ENCODE measurements at regions of chr20 and their contacts with region 1.

Region 1: DNA sequence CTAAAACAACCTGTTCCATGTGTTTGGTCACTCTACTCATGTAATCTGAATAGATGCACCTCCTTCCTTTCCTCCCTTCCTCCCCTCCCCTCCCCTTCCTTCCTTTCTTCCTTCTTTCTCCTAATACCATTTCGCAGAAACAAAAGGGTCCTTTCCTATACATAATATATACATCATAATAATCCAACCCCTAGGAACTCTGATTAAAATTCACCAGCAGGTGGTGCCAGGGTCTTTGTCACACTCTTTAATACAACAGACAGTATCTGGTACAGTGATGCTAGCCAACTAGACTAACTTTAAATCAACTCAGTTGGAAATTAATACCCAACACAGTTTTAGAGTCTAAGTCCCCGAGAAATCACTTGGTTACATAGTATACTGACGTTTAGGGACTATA is 181.2 kb upstream of the SHLD1 start:
- DNase-seq: peak in 7 of 9 donors; percentile 56 to 75 (median 67)
- ATAC-seq: peak; percentile 77
- H3K4me3 ChIP-seq: no peak overlapping the region
- H3K4me3 Mint-ChIP-seq: peak overlapping the region in 8 of 10 donors; percentile 22 to 83 (median 49)
- H3K27ac ChIP-seq: peak overlapping the region; percentile 58
- H3K27ac Mint-ChIP-seq: peak overlapping the region; percentile 6 to 96 (median 90)
- H3K4me1 ChIP-seq: peaks cover 0 to 17% of the 10 kb centered on the region in 2 donors
- H3K4me1 Mint-ChIP-seq: peaks cover 20 to 59% (median 36%) of the 10 kb centered on the region in 7 donors
- H3K27me3 ChIP-seq: no peaks in the 10 kb centered on the region
- H3K27me3 Mint-ChIP-seq: no peaks in the 10 kb centered on the region

Region 2: DNA sequence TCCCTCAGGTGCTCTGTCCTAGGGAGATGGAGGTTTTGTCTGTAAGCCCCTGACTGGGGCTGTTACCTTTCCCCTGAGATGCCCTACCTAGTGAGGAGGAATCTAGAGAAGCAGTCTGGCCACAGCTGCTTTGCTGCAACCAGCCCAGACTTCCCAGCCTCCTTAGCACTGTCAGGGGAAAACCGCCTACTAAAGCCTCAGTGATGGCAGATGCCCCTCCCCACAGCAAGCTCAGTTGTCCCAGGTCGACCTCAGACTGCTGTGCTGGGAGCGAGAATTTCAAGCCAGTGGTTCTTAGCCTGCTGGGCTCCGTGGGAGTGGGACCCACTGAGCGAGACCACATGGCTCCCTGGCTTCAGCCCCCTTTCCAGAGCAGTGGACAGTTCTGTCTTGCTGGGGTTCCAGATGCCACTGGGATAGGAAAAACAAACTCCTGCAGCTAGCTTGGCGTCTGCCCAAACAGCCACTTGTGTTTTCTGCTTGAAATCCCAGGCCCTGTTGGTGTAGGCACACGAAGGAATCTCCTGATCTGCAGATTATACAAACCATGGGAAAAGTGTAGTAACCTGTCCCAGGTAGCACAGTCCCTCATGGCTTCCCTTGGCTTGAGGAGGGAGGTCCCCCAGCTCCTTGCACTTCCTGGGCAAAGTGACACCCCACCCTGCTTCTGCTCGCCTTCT is 105.9 kb before region 1 on chr20:
- CTCF ChIA-PET with region 1: no interaction called
- POLR2A ChIA-PET with region 1: no interaction called
- intact Hi-C with region 1: no loop called
- DNase-seq: no peak
- ATAC-seq: no peak
- H3K4me3 ChIP-seq: no peak overlapping the region
- H3K4me3 Mint-ChIP-seq: no peak overlapping the region
- H3K27ac ChIP-seq: no peak overlapping the region
- H3K27ac Mint-ChIP-seq: no peak overlapping the region
- H3K4me1 ChIP-seq: no peaks in the 10 kb centered on the region
- H3K4me1 Mint-ChIP-seq: no peaks in the 10 kb centered on the region
- H3K27me3 ChIP-seq: no peaks in the 10 kb centered on the region
- H3K27me3 Mint-ChIP-seq: peaks cover 15 to 55% (median 32%) of the 10 kb centered on the region in 5 donors

Region 3: DNA sequence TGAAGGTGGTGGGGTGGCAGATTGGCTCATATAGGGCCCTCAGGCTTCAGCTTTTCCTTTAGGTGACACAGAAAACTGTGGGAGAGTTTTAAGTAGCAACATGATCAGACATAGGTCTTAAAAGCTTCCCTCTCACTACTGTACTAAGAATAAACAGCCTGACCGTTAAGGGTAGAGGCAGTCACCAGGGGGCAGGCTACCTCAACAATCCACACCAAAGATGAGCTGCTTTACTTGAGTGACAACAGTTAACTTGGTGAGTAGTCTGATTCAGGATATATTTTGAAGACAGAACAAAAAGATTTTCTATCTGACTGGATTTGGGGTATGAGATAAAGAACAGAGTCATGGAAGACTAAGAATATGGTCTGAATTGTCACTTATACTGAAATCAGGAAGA is 11.9 kb before region 1 on chr20:
- CTCF ChIA-PET with region 1: interaction called, 10 read pairs
- POLR2A ChIA-PET with region 1: interaction called, 3 read pairs
- intact Hi-C with region 1: no loop called
- DNase-seq: peak in 8 of 9 donors; percentile 24 to 63 (median 41)
- ATAC-seq: peak; percentile 77
- H3K4me3 ChIP-seq: no peak overlapping the region
- H3K4me3 Mint-ChIP-seq: no peak overlapping the region
- H3K27ac ChIP-seq: peak overlapping the region; percentile 11
- H3K27ac Mint-ChIP-seq: peak overlapping the region; percentile 1 to 74 (median 25)
- H3K4me1 ChIP-seq: no peaks in the 10 kb centered on the region
- H3K4me1 Mint-ChIP-seq: peaks cover 2 to 35% (median 13%) of the 10 kb centered on the region in 7 donors
- H3K27me3 ChIP-seq: no peaks in the 10 kb centered on the region
- H3K27me3 Mint-ChIP-seq: no peaks in the 10 kb centered on the region

Region 4: GRCh38 chr20:5596401-5597193 is 27.6 kb after region 1 on chr20:
- CTCF ChIA-PET with region 1: interaction called, 3 read pairs
- POLR2A ChIA-PET with region 1: interaction called, 5 read pairs
- intact Hi-C with region 1: loop called in 1 of 2 experiments (anchors 1 kb)
- DNase-seq: no peak
- ATAC-seq: no peak
- H3K4me3 ChIP-seq: no peak overlapping the region
- H3K4me3 Mint-ChIP-seq: peak overlapping the region in 9 of 10 donors; percentile 2 to 74 (median 29)
- H3K27ac ChIP-seq: peak overlapping the region; percentile 52
- H3K27ac Mint-ChIP-seq: peak overlapping the region; percentile 47 to 88 (median 77)
- H3K4me1 ChIP-seq: peaks cover 21 to 58% of the 10 kb centered on the region in 2 donors
- H3K4me1 Mint-ChIP-seq: peaks cover 38 to 76% (median 70%) of the 10 kb centered on the region in 7 donors
- H3K27me3 ChIP-seq: no peaks in the 10 kb centered on the region
- H3K27me3 Mint-ChIP-seq: no peaks in the 10 kb centered on the region

Region 5: GRCh38 chr20:5627463-5628050 is 58.5 kb after region 1 on chr20:
- CTCF ChIA-PET with region 1: no interaction called
- POLR2A ChIA-PET with region 1: no interaction called
- intact Hi-C with region 1: no loop called
- DNase-seq: no peak
- ATAC-seq: no peak
- H3K4me3 ChIP-seq: no peak overlapping the region
- H3K4me3 Mint-ChIP-seq: no peak overlapping the region
- H3K27ac ChIP-seq: no peak overlapping the region
- H3K27ac Mint-ChIP-seq: peak overlapping the region in 2 of 9 donors; percentile 21 to 39
- H3K4me1 ChIP-seq: no peaks in the 10 kb centered on the region
- H3K4me1 Mint-ChIP-seq: peaks cover 0 to 2% (median 0%) of the 10 kb centered on the region in 7 donors
- H3K27me3 ChIP-seq: no peaks in the 10 kb centered on the region
- H3K27me3 Mint-ChIP-seq: no peaks in the 10 kb centered on the region

Region 6: GRCh38 chr20:5749952-5750779 is 181.1 kb after region 1 on chr20 and contains the start of gene SHLD1:
- CTCF ChIA-PET with region 1: interaction called, 4 read pairs
- POLR2A ChIA-PET with region 1: no interaction called
- intact Hi-C with region 1: loop called in 1 of 2 experiments (anchors 1 kb)
- DNase-seq: peak; percentile 56 to 86 (median 80)
- ATAC-seq: peak; percentile 98
- H3K4me3 ChIP-seq: peak within 1 kb of the TSS; percentile 70
- H3K4me3 Mint-ChIP-seq: peak within 1 kb of the TSS; percentile 81 to 97 (median 92)
- H3K27ac ChIP-seq: peak within 1 kb of the TSS; percentile 79
- H3K27ac Mint-ChIP-seq: peak within 1 kb of the TSS; percentile 91 to 100 (median 94)
- H3K4me1 ChIP-seq: peaks cover 5 to 14% of the 10 kb centered on the region in 2 donors
- H3K4me1 Mint-ChIP-seq: peaks cover 15 to 38% (median 28%) of the 10 kb centered on the region in 7 donors
- H3K27me3 ChIP-seq: no peaks in the 10 kb centered on the region
- H3K27me3 Mint-ChIP-seq: peaks cover 0 to 4% (median 0%) of the 10 kb centered on the region in 5 donors
- total RNA-seq, gene SHLD1: 12.1 to 14.2 (median 13.2) TPM

Region 7: DNA sequence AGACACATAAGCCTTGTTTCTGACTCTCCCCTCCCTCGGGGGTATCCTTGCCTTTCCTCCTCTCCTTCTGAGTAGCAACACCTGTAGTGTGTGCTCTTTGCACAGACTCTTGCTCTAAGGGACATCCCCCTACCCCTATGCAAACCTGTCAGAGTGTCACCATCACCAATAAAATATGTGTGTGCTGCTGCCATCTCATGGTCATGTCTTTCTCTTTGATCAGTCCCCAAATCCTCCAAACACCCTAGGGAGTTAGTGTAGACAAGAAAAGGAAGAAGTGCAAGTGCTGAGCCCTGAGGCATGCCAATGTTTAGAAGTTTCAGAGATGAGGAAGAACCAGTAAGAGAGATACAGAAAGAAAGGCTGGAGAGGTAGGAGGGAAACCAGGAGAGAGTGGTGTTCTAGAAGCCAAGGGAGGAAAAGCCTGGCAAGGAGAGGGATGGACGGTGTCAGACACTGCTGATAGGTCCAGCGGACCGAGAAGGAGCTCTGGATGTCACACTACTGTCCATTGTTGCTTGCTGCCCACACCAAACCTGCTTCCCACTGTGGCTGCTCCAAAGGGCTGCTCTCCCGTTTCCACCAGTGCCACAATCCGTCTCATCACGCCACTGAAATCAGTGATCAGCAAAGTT is 364.9 kb after region 1 on chr20:
- CTCF ChIA-PET with region 1: no interaction called
- POLR2A ChIA-PET with region 1: no interaction called
- intact Hi-C with region 1: loop called in 1 of 2 experiments (anchors 2 kb)
- DNase-seq: peak in 1 of 9 donors; percentile 36
- ATAC-seq: peak; percentile 44
- H3K4me3 ChIP-seq: no peak overlapping the region
- H3K4me3 Mint-ChIP-seq: no peak overlapping the region
- H3K27ac ChIP-seq: no peak overlapping the region
- H3K27ac Mint-ChIP-seq: peak overlapping the region in 2 of 9 donors; percentile 18 to 32
- H3K4me1 ChIP-seq: no peaks in the 10 kb centered on the region
- H3K4me1 Mint-ChIP-seq: peaks cover 0 to 9% (median 0%) of the 10 kb centered on the region in 7 donors
- H3K27me3 ChIP-seq: no peaks in the 10 kb centered on the region
- H3K27me3 Mint-ChIP-seq: peaks cover 0 to 9% (median 3%) of the 10 kb centered on the region in 5 donors

Region 8: DNA sequence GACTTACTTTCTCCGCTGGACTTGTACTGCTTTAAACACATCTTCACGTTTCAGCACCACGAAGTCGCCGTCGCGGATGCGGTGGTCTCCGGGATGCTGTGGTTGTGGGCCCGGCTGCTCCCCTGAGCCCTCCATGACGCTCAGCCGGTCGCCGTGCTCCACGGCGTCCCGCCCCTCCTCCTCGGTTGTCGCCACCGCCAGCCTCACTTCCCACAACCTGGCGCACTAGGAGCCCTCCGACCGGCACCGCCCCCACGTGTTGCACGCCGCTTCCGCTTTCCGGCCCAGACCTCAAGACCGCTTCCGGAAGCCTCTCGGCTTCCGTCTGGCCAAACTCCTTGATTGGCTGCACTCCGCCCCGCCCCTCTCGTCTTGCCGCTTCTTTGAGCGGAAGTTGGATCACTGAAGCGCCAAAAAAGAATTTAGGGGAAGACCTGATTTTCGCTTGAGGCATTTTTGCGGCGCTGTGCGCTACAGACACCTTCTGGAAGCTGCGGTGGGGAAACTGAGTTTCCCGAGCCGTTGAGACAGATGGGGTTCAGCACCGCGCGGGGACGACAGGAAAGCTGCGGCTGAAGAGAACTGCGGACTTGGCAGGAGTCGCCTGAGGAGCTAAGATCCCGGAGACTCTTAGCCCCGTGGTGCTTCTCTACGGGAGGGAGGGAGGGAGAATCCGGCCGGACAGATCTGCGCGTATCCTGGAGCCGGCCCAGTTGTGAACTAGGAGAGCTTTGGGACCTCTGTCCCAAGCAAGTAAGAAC is 381.4 kb after region 1 on chr20 and contains the starts of genes MCM8 and TRMT6:
- CTCF ChIA-PET with region 1: interaction called, 3 read pairs
- POLR2A ChIA-PET with region 1: no interaction called
- intact Hi-C with region 1: loop called in 1 of 2 experiments (anchors 1 kb)
- DNase-seq: peak; percentile 82 to 97 (median 95)
- ATAC-seq: peak; percentile 97
- H3K4me3 ChIP-seq: peak within 1 kb of the TSS; percentile 89
- H3K4me3 Mint-ChIP-seq: peak within 1 kb of the TSS; percentile 91 to 99 (median 96)
- H3K27ac ChIP-seq: peak within 1 kb of the TSS; percentile 82
- H3K27ac Mint-ChIP-seq: peak within 1 kb of the TSS; percentile 91 to 100 (median 97)
- H3K4me1 ChIP-seq: peaks cover 13 to 17% of the 10 kb centered on the region in 2 donors
- H3K4me1 Mint-ChIP-seq: peaks cover 7 to 61% (median 45%) of the 10 kb centered on the region in 7 donors
- H3K27me3 ChIP-seq: no peaks in the 10 kb centered on the region
- H3K27me3 Mint-ChIP-seq: peaks cover 0 to 4% (median 0%) of the 10 kb centered on the region in 5 donors
- total RNA-seq, gene MCM8: 2.6 to 22.7 (median 10.8) TPM
- total RNA-seq, gene TRMT6: 14.5 to 18.5 (median 17.8) TPM

Region 9: DNA sequence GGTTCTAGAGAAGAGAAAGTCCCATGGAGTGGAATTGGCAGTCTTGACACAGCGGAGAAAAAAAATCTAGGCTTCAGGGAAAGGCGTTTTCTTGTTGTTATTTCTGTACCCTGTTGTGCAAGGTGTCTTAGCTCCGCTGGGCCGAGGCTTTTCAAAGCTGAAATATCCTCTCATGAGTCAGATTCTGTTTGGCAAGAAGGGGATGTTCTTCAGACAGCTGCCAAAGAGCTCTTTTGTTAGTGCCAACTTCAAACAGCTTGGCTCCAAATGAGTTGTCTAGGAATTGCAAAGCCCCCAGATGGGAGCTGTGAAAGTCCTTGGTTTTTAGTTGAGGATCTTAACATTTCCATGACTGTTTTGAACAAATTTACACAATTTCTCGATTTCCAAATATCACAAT is 439.2 kb after region 1 on chr20:
- CTCF ChIA-PET with region 1: interaction called, 3 read pairs
- POLR2A ChIA-PET with region 1: no interaction called
- intact Hi-C with region 1: loop called in 1 of 2 experiments (anchors 1 kb)
- DNase-seq: no peak
- ATAC-seq: no peak
- H3K4me3 ChIP-seq: no peak overlapping the region
- H3K4me3 Mint-ChIP-seq: peak overlapping the region; percentile 58 to 99 (median 96)
- H3K27ac ChIP-seq: no peak overlapping the region
- H3K27ac Mint-ChIP-seq: peak overlapping the region in 8 of 9 donors; percentile 10 to 77 (median 39)
- H3K4me1 ChIP-seq: peaks cover 3 to 16% of the 10 kb centered on the region in 2 donors
- H3K4me1 Mint-ChIP-seq: peaks cover 30 to 68% (median 44%) of the 10 kb centered on the region in 7 donors
- H3K27me3 ChIP-seq: no peaks in the 10 kb centered on the region
- H3K27me3 Mint-ChIP-seq: no peaks in the 10 kb centered on the region